BJ (cell line): ENCODE measurements at regions of chr10 and their contacts with region 1.

Region 1: GRCh38 chr10:126504063-126504739 is 115.9 kb upstream of the ADAM12 start:
- DNase-seq: peak; percentile 3
- H3K4me3 ChIP-seq: no peak overlapping the region
- H3K27me3 ChIP-seq: no peaks in the 10 kb centered on the region
- CTCF ChIP-seq: peak; percentile 78

Region 2: GRCh38 chr10:124741281-124741921 is 1762.8 kb before region 1 on chr10:
- CTCF ChIA-PET with region 1: no interaction called
- POLR2A ChIA-PET with region 1: no interaction called
- DNase-seq: no peak
- H3K4me3 ChIP-seq: no peak overlapping the region
- H3K27me3 ChIP-seq: no peaks in the 10 kb centered on the region
- CTCF ChIP-seq: peak; percentile 87

Region 3: DNA sequence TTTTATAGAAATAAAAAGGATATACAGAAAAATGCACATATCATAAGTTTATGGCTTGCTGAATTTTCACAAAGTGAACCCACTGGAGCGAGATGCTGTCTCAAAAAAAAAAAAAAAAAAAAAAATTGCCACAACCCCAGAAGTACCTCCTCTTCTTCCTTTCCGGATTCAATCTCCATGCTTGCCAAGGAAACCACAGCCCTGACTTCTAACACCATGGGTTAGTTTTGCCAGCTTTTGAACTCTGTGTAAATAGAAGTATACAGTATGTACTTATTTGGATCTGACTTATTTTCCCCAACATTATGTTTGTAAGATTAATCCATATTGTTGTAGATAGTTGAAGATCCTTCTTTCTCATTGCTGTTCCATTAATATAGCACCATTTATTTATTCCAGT is 567.9 kb before region 1 on chr10:
- CTCF ChIA-PET with region 1: interaction called, 66 read pairs
- POLR2A ChIA-PET with region 1: no interaction called
- DNase-seq: no peak
- H3K4me3 ChIP-seq: no peak overlapping the region
- H3K27me3 ChIP-seq: no peaks in the 10 kb centered on the region
- CTCF ChIP-seq: no peak

Region 4: DNA sequence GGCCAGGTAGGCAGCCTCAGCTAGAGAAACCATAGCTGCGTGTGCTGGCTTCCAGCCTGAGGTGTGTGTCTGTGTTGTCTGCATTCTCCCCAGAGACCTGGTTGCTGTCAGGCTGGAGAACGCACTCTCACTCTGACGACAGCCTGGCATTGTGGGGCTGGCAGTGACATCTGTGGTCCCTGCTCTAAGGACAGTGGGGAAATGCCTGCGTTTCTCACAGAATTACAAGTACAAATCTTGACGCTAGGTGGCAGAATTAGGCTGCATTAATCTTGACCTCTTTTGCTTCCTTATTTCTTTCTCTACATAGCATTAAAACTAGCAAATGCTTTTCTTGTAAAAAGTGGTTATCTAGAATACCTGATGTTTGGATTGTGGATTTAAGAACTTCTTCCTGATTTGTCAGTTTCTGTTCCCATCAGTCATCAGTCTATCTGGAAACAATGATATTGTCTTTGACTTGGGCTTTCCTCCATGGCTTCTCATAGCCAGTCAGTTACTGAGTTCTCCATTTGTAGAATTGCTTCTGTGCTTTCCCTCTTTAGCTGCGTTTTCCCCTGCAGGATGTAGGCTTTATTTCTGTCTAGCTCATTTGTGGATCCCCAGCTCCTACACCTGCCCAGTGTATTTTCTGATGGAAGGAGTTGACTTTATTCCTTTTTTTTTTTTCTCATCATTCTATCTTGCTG is 521.8 kb before region 1 on chr10:
- CTCF ChIA-PET with region 1: interaction called, 79 read pairs
- POLR2A ChIA-PET with region 1: no interaction called
- DNase-seq: peak; percentile 15
- H3K4me3 ChIP-seq: no peak overlapping the region
- H3K27me3 ChIP-seq: no peaks in the 10 kb centered on the region
- CTCF ChIP-seq: peak; percentile 45

Region 5: GRCh38 chr10:126387023-126387921 is 116.9 kb before region 1 on chr10:
- CTCF ChIA-PET with region 1: interaction called, 18 read pairs
- POLR2A ChIA-PET with region 1: no interaction called
- DNase-seq: peak; percentile 35
- H3K4me3 ChIP-seq: peak overlapping the region; percentile 60
- H3K27me3 ChIP-seq: no peaks in the 10 kb centered on the region
- CTCF ChIP-seq: peak; percentile 93